ENCODE measurements at regions of chr3 and their contacts with region 1.

Region 1: GRCh38 chr3:127535901-127536829 is 54.4 kb downstream of the TPRA1 start:
- DNase-seq: no peak
- ATAC-seq: no peak

Region 2: DNA sequence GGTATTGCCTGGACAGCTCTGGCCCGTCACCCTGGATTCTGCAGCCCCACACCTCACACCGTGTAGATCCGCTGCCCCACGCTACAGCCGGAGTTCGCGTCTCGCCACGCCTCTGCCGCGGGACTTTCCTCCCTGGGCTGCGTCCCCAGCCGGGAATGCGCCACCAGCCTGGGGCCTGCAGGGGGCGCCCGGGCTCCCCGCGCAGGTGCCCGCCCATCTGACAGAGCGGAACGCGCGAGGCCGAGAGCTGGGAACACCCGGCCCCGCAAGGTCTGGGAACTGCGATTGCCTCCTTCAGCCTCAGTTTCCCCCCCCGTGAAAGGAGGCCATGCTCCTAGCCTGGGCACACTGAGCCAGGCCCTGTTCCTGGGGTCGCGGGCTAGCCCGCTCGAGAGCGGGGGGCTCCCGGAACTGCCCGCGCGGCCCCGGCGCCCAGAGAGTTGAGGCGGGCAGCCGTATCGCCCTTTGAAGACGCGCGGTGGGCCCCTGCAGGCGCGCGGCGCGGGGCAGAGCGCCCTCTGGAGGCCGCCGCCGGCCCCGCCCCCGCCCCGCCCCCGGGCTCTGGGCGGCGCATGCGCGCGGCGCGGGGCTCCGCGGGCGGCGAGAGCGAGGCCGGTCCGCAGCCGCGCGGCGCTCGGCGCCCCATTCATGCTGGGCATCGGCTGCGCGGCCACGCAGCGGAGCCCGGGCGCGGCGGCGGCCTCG is 553.5 kb before region 1 on chr3 and contains the start of gene PLXNA1:
- intact Hi-C with region 1: loop called in 1 of 2 experiments (anchors 10 kb)
- DNase-seq: peak; percentile 87
- ATAC-seq: peak; percentile 88 to 89
- total RNA-seq, gene PLXNA1: 18.6 to 20.4 TPM